Adrenal gland (tissue), 19 donors: ENCODE measurements at regions of chr19 and their contacts with region 1.

Region 1: GRCh38 chr19:56403764-56404704 is at the start of gene ZNF583:
- DNase-seq: peak; percentile 97 to 98 (median 98)
- H3K4me3 ChIP-seq: peak within 1 kb of the TSS; percentile 26 to 83 (median 56)
- H3K27ac ChIP-seq: peak within 1 kb of the TSS; percentile 86 to 98 (median 93)
- H3K4me1 ChIP-seq: peaks cover 0 to 11% of the 10 kb centered on the region in 2 donors
- H3K27me3 ChIP-seq: no peaks in the 10 kb centered on the region
- CTCF ChIP-seq: no peak
- POLR2A ChIP-seq: peak; percentile 17 to 37
- total RNA-seq, gene ZNF583: 4.0 to 11.0 (median 6.3) TPM

Region 2: DNA sequence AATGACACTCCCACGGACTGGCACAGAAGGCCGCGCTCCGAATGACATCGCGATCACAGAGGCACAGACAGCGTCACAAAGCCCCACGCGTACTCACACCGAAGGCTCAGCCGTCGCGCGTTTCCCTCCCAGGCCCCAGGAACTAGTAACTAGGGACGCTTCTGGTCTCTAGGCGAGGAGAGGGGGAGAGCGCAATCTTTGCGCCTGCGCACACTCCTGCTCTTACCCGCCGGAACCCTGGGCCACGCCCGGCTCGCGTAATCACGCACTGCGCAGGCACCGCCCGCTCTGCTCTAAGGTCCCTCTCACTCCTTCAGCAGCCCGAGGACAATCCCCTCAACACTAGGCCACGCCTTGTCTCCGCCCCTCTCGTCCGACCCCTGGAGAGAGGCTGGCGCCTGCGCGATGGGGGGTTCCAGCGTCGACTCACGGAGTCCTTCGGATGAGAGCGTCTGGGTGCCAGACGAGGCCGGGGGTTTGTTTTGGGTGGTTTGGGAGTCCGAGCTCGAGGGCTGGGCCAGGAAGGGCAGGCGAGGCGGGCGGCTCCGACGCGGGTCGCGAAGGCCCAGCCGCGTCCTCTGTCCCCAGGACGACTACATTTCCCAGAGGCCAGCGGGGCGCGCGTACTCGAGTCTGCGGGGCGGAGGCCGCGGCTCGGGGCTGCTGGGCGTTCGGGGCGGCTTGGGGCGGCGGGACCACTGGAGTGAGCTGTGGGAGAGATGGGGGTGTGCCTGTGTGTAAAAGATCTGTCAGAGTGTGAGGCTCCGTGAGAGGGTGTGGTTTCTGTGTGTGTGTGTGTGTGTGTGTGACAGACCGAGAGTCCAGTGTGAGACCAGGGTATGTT is 103.6 kb after region 1 on chr19 and contains the start of gene ZNF471:
- intact Hi-C with region 1: loop called in 1 of 2 experiments (anchors 10 kb)
- DNase-seq: peak; percentile 98 to 99 (median 99)
- H3K4me3 ChIP-seq: peak within 1 kb of the TSS; percentile 49 to 78 (median 58)
- H3K27ac ChIP-seq: peak within 1 kb of the TSS; percentile 71 to 97 (median 89)
- H3K4me1 ChIP-seq: peaks cover 4 to 14% of the 10 kb centered on the region in 2 donors
- H3K27me3 ChIP-seq: no peaks in the 10 kb centered on the region
- CTCF ChIP-seq: no peak
- POLR2A ChIP-seq: peak in 1 of 2 donors; percentile 53
- total RNA-seq, gene ZNF471: 2.9 to 16.0 (median 6.9) TPM